Activated T-helper 1 cell treated with anti-CD3 and anti-CD28 coated beads, Interleukin-12 subunit alpha, Interleukin-12 subunit beta, Interleukin-2, Interleukin-4 antibody, amounts not matched to agents 30 ng/mL and 10 ng/mL and 1 ng/mL, durations not matched to agents 14 hours and 24 hours and 36 hours (primary cell): ENCODE measurements at regions of chr2 and their contacts with region 1.

Region 1: DNA sequence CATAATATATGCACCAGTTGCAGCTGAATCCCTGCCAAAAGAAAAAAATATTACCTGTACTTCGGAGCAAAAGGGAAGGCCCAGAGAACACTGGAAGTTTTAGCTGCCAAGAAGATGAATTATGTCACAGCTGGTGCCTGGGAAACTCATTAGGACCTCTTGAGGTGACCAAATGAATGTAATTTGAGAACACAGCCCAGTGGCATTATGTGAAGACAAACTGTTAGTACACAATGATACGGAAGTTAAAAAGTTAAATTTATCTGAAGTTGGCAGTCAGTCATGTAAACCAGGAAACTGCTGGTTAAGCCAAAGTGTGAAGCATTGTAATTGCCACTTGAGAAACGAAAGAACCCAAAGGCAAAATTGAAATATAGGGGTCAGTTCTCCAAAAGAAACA is 80.7 kb downstream of the EML4 start:
- DNase-seq: no peak
- H3K4me3 Mint-ChIP-seq: no peak overlapping the region
- H3K27ac Mint-ChIP-seq: no peak overlapping the region
- H3K4me1 Mint-ChIP-seq: peaks cover 33% of the 10 kb centered on the region
- H3K27me3 Mint-ChIP-seq: no peaks in the 10 kb centered on the region

Region 2: DNA sequence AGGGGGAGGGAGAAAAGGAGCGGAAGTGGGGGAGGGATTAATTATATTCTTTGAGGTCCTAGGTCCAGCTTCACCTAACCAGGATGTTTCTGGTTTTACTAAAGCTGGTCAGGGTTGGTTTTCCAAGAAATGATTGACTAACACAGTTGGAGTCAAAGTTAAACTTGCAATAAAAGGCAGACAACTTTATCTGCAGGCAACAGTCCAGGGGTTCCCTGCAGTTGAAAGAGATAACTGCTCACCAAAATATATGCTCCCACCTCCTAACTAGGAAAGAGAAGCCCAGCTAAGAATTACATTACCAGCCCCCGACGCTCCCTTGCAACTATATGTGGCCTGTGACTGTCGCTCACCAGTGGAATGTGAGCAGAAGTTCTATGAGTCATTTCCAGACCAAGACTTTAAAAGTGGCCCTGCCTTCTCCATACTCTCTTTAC is 342.1 kb before region 1 on chr2:
- intact Hi-C with region 1: no loop called
- DNase-seq: no peak
- H3K4me3 Mint-ChIP-seq: no peak overlapping the region
- H3K27ac Mint-ChIP-seq: no peak overlapping the region
- H3K4me1 Mint-ChIP-seq: no peaks in the 10 kb centered on the region
- H3K27me3 Mint-ChIP-seq: peaks cover 12% of the 10 kb centered on the region

Region 3: GRCh38 chr2:42296226-42296625 is 46.3 kb after region 1 on chr2:
- intact Hi-C with region 1: loop called (anchors 5 kb)
- DNase-seq: no peak
- H3K4me3 Mint-ChIP-seq: no peak overlapping the region
- H3K27ac Mint-ChIP-seq: peak overlapping the region; percentile 25
- H3K4me1 Mint-ChIP-seq: peaks cover 50% of the 10 kb centered on the region
- H3K27me3 Mint-ChIP-seq: no peaks in the 10 kb centered on the region